Heart left ventricle (tissue), 16 donors: ENCODE measurements at regions of chr1 and their contacts with region 1.

Region 1: GRCh38 chr1:209747580-209748262 is 8.1 kb upstream of the TRAF3IP3 start:
- DNase-seq: peak; percentile 90 to 96 (median 92)
- ATAC-seq: peak; percentile 97 to 99 (median 99)
- H3K4me3 ChIP-seq: peak overlapping the region in 10 of 12 donors; percentile 14 to 51 (median 35)
- H3K27ac ChIP-seq: peak overlapping the region in 11 of 12 donors; percentile 15 to 72 (median 48)
- H3K4me1 ChIP-seq: peaks cover 0 to 53% (median 17%) of the 10 kb centered on the region in 12 donors
- H3K27me3 ChIP-seq: no peaks in the 10 kb centered on the region
- CTCF ChIP-seq: peak; percentile 77 to 96 (median 92)
- POLR2A ChIP-seq: no peak

Region 2: GRCh38 chr1:209576798-209577197 is 170.9 kb before region 1 on chr1:
- intact Hi-C with region 1: loop called (anchors 2 to 5 kb)
- DNase-seq: peak; percentile 76 to 83 (median 80)
- ATAC-seq: peak; percentile 68 to 97 (median 94)
- H3K4me3 ChIP-seq: no peak overlapping the region
- H3K27ac ChIP-seq: no peak overlapping the region
- H3K4me1 ChIP-seq: peaks cover 0 to 7% (median 0%) of the 10 kb centered on the region in 12 donors
- H3K27me3 ChIP-seq: peaks cover 0 to 19% (median 5%) of the 10 kb centered on the region in 9 donors
- CTCF ChIP-seq: peak; percentile 92 to 98 (median 94)
- POLR2A ChIP-seq: no peak

Region 3: DNA sequence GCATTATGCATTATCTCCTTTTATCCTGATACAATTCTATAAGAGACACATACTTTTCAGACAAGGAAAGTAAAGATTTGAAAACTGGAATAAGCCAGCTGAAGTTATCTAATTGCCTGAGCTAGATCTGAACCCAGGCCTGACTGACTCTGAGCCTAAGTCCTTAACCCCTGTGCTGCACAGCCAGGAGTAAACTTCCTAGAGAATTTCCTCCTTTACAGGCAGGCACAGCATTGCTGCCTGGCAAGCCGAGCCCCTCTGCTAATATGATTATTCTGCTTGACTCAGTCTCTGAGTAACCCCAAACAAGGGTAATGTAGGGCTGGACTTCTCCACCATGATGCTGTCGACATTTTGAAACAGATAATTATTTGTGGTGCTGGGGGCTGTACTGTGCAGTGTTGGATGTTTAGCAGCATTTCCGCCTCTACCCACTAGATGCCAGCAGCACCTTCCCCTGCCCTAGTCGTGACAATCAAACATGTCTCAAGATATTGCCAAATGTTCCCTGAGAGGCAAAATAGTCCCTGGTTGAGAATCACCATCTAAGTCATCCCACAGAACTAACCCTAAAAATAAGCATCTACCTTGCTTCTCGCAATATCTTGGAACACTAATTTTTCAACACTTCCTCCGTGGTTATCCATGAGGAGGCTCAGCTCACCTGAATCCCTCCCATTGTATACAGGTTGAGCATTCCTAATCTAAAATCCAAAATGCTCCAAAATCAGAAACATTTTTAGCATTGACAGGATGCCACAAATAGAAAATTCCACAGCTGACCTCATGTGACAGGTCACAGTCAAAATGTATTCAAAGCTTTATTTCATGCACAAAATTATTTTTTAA is 145.7 kb before region 1 on chr1:
- intact Hi-C with region 1: loop called in 3 of 10 experiments (anchors 2 to 5 kb)
- DNase-seq: no peak
- ATAC-seq: peak; percentile 49 to 90 (median 85)
- H3K4me3 ChIP-seq: no peak overlapping the region
- H3K27ac ChIP-seq: no peak overlapping the region
- H3K4me1 ChIP-seq: no peaks in the 10 kb centered on the region
- H3K27me3 ChIP-seq: no peaks in the 10 kb centered on the region
- CTCF ChIP-seq: peak; percentile 44 to 73 (median 62)
- POLR2A ChIP-seq: no peak

Region 4: DNA sequence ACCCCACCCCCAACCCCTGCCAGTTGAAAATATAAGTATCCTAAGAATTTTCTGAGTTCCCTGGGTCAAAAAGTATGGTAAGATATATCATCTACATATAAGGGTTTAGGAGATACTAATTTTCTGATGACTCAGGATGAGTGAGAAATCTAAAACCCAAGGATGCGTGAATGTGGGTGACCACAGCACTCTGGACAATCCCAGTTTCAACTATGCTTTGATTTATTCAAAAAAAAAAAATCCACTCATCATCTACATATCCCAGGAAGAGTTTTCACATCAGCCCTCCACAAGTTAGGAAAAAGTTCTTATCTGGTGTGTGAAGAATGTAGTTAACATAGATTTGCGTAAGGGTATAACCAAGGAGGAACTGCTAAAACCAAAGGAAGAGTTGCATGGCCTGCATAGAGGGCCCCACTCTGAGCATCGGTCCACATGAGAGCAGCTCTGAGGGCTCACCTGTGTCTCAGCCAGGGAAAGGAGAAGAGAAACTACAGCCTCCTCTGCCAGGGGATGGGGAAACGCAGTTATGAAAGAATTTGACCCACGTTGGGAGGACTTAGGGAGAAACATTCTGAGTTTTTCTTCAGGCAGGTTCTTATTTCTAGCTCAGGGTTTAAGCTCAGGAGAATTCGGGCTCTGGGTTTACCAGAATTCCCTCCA is 114.3 kb before region 1 on chr1:
- intact Hi-C with region 1: loop called in 5 of 10 experiments (anchors 5 to 10 kb)
- DNase-seq: no peak
- ATAC-seq: no peak
- H3K4me3 ChIP-seq: no peak overlapping the region
- H3K27ac ChIP-seq: no peak overlapping the region
- H3K4me1 ChIP-seq: peaks cover 0 to 31% (median 14%) of the 10 kb centered on the region in 12 donors
- H3K27me3 ChIP-seq: no peaks in the 10 kb centered on the region
- CTCF ChIP-seq: no peak
- POLR2A ChIP-seq: no peak

Region 5: DNA sequence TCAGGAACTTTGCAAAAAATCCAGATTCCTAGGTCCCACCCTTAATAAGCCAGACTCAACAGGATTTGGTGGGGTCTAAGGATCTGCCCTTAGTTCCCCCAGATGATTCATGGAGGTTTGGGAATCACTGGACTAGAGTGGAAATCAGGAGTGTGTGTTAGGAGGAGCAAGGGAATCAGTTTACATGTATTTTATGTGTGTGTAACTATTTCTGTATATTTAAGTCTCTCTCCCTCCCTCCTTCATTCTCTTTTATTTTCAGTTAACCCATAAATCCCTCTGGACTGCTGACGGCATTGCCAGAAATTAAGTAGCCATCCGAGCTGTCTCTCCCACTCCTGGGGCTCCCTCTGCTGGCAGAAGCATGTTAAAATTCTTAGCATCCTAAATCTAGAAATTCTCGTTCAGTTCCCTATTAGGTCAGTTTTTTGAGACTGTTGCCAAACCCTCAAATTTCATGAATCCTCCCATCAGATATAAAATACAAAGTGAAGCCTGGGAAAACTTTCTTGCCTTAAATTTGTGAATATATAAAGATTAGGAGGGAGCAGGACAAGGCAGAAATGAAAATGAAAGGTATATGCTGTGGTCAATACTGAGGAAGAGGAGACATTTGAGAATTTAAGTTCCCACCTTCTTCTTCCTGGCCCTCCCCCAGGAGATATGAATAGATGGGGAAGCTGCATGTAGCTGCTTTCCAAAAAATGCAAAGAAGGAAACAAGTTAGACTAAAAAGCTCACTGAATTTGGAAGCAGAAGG is 54.8 kb before region 1 on chr1:
- intact Hi-C with region 1: loop called in 9 of 10 experiments (anchors 1 to 5 kb)
- DNase-seq: peak; percentile 68 to 85 (median 80)
- ATAC-seq: peak in 3 of 4 donors; percentile 56 to 78 (median 61)
- H3K4me3 ChIP-seq: no peak overlapping the region
- H3K27ac ChIP-seq: peak overlapping the region in 5 of 12 donors; percentile 17 to 56 (median 49)
- H3K4me1 ChIP-seq: peaks cover 0 to 46% (median 14%) of the 10 kb centered on the region in 12 donors
- H3K27me3 ChIP-seq: no peaks in the 10 kb centered on the region
- CTCF ChIP-seq: peak; percentile 78 to 94 (median 85)
- POLR2A ChIP-seq: no peak

Region 6: GRCh38 chr1:209769171-209769904 is 21.6 kb after region 1 on chr1:
- intact Hi-C with region 1: no loop called
- DNase-seq: peak; percentile 77 to 84 (median 84)
- ATAC-seq: peak; percentile 72 to 91 (median 90)
- H3K4me3 ChIP-seq: peak overlapping the region in 5 of 12 donors; percentile 16 to 59 (median 26)
- H3K27ac ChIP-seq: peak overlapping the region; percentile 56 to 90 (median 77)
- H3K4me1 ChIP-seq: peaks cover 4 to 48% (median 20%) of the 10 kb centered on the region in 12 donors
- H3K27me3 ChIP-seq: no peaks in the 10 kb centered on the region
- CTCF ChIP-seq: peak in 1 of 12 donors; percentile 15
- POLR2A ChIP-seq: no peak

Region 7: DNA sequence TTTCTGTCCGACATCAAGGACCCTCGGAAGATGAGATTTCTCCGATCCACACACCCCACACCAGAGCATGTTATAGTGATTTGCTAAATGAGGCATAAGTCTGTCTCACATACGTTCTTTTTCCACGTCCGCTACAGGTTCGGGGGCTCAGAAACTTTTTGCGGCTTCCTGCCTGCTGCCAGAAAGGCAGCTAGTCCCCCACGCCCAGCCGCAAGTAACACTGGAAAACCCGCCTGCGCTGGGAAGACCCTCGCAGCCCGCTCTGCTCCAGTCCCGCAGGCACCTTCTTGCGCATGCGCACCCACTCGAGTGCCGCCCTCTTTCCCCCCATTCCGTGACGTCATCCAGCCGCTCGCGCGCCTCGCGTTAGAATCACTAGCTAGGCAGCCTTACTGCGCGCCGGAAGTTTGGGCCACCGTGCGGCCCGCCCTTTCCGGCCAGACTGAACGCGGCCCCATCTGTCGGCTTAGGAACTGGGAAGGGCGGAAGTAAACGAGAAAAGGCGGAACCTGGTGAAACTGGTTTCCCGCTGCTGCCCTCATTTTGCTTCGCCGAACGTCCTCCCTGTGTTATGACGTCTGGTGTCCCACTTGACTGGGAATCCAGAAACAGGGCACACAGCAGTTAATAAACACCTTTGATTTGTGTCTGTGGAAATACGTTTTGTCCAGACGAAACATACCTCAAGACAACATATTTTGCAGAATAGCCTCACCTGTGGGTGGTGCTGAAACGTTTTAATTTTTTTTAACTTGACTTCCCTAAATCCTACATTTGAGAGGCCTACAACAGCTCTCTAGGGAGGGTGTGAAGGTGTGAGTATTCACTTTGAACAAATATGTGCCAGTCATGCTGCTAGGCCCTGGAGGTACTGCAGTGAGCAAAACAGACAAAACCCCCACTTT is 36.8 kb after region 1 on chr1 and contains the start of gene C1orf74:
- intact Hi-C with region 1: loop called in 1 of 10 experiments (anchors 1 kb)
- DNase-seq: peak; percentile 99 to 100 (median 99)
- ATAC-seq: peak; percentile 93 to 99 (median 98)
- H3K4me3 ChIP-seq: peak within 1 kb of the TSS; percentile 42 to 76 (median 64)
- H3K27ac ChIP-seq: peak within 1 kb of the TSS; percentile 70 to 94 (median 86)
- H3K4me1 ChIP-seq: peaks cover 4 to 45% (median 20%) of the 10 kb centered on the region in 12 donors
- H3K27me3 ChIP-seq: no peaks in the 10 kb centered on the region
- CTCF ChIP-seq: peak in 2 of 12 donors; percentile 7 to 23
- POLR2A ChIP-seq: peak in 1 of 2 donors; percentile 83
- total RNA-seq, gene C1orf74: 1.6 to 2.6 (median 2.4) TPM